Activated CD4-positive, alpha-beta T cell treated with anti-CD3 and anti-CD28 coated beads for 36 hours (primary cell): ENCODE measurements at regions of chr17 and their contacts with region 1.

Region 1: GRCh38 chr17:44775136-44775837 is 16.5 kb downstream of the ADAM11 start:
- DNase-seq: no peak
- ATAC-seq: peak; percentile 97
- H3K4me3 Mint-ChIP-seq: peak overlapping the region; percentile 77
- H3K27ac Mint-ChIP-seq: no peak overlapping the region
- H3K4me1 Mint-ChIP-seq: peaks cover 7% of the 10 kb centered on the region
- H3K27me3 Mint-ChIP-seq: no peaks in the 10 kb centered on the region

Region 2: GRCh38 chr17:43778337-43779144 is 996.7 kb before region 1 on chr17 and contains the start of gene DUSP3:
- CTCF ChIA-PET with region 1: no interaction called
- POLR2A ChIA-PET with region 1: no interaction called
- intact Hi-C with region 1: loop called in 1 of 2 experiments (anchors 5 kb)
- DNase-seq: peak; percentile 85
- ATAC-seq: peak; percentile 98
- H3K4me3 Mint-ChIP-seq: peak within 1 kb of the TSS; percentile 78
- H3K27ac Mint-ChIP-seq: peak within 1 kb of the TSS; percentile 70
- H3K4me1 Mint-ChIP-seq: peaks cover 7% of the 10 kb centered on the region
- H3K27me3 Mint-ChIP-seq: peaks cover 19% of the 10 kb centered on the region
- total RNA-seq, gene DUSP3: 23.4 to 24.8 TPM

Region 3: DNA sequence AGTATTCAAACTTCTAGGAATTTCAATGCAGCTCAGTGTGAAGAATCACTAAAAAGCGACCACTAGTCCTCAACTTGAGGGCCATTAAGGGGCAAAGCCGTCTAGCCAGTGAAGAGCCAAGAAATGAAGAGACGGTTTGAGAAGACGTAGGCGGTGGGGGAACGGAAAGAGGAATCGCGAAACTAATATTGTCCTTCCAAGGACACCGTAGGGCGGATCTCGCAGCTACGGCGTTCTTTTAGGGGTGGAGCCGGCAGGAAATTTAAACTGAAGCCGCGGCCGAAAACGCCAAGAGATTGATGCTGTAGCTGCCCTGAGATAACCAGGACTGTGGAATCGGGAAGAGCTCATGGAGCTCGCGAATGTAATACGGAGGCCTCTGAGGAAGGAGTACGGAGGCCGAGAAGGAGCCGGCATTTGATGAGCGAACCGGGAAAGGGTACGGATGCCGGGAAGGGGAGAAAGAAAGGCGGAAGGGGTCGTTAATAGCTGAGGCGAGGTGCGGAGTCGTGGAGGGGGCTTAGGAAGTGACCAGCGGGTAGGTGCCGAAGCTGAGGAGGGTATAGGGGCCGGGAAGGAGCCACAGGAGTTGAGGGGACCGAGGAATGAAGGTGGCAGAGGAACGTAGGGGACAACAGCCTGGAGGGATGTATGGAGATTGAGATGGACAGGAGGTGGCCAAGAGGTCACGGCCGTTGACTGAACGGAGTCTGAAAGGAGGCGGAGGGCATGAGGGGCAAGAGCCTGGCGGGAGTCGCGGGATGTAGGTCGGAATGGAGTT is 66.7 kb before region 1 on chr17 and contains the start of gene DBF4B:
- CTCF ChIA-PET with region 1: no interaction called
- POLR2A ChIA-PET with region 1: no interaction called
- intact Hi-C with region 1: loop called in 1 of 2 experiments (anchors 1 kb)
- DNase-seq: peak; percentile 89
- ATAC-seq: peak; percentile 85
- H3K4me3 Mint-ChIP-seq: no peak within 1 kb of the TSS
- H3K27ac Mint-ChIP-seq: no peak within 1 kb of the TSS
- H3K4me1 Mint-ChIP-seq: peaks cover 5% of the 10 kb centered on the region
- H3K27me3 Mint-ChIP-seq: peaks cover 5% of the 10 kb centered on the region
- total RNA-seq, gene DBF4B: 23.5 to 26.4 TPM

Region 4: DNA sequence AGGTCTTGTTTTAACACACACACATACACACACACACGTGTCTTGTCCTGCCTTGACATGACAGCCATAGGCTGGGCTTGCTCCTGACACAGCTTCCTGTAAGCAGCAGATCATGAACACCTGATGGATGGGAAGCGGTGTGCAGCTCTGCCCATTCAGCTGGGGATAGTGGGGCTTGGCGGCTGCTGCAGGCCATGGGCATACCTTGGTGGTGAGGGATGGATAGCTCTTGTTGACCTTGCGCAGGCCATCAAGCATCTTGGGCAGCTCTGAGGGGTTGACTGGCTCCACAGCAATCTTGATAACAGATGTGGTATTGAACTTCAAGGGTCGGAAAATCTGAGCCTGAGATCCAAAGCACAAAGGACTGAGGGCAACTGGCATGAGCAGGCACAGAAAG is 84.4 kb after region 1 on chr17:
- CTCF ChIA-PET with region 1: interaction called, 49 read pairs
- POLR2A ChIA-PET with region 1: interaction called, 8 read pairs
- intact Hi-C with region 1: no loop called
- DNase-seq: no peak
- ATAC-seq: no peak
- H3K4me3 Mint-ChIP-seq: no peak overlapping the region
- H3K27ac Mint-ChIP-seq: no peak overlapping the region
- H3K4me1 Mint-ChIP-seq: no peaks in the 10 kb centered on the region
- H3K27me3 Mint-ChIP-seq: no peaks in the 10 kb centered on the region

Region 5: DNA sequence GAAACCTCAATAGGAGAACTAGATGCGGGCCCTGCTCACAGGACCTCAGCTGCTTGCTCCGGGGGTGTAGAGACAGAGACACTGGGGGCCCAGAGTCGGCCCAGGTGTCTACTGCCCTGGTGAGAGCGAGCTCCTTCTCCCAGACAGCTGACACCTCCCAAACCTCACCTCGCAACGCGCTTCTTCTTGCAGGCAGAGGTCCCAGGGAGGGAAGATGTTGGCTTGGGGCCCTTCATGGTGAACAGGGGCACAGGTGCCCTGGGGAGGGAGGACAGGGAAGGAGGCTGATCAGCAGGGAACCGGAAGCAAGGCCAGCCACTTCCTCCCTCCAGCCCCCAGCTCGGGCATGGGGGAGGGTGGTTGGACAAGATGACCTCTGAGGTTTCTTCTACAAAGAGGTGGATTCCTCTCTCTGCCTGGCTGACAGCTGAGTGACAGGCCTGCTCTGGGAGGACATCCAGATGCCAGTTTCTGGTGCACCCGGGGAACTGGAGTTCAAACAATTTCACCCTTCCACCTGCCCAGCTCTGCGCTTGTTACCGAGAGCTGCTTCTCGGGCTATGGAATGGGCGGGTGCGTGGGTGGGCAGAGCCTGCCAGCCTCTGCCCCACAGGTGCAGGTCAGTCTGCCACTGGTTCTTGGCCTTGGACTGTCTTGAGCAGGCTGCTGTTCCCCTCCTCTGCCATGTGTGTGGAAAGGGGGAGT is 151.7 kb after region 1 on chr17:
- CTCF ChIA-PET with region 1: no interaction called
- POLR2A ChIA-PET with region 1: no interaction called
- intact Hi-C with region 1: no loop called
- DNase-seq: peak; percentile 3
- ATAC-seq: no peak
- H3K4me3 Mint-ChIP-seq: no peak overlapping the region
- H3K27ac Mint-ChIP-seq: no peak overlapping the region
- H3K4me1 Mint-ChIP-seq: no peaks in the 10 kb centered on the region
- H3K27me3 Mint-ChIP-seq: no peaks in the 10 kb centered on the region

Region 6: DNA sequence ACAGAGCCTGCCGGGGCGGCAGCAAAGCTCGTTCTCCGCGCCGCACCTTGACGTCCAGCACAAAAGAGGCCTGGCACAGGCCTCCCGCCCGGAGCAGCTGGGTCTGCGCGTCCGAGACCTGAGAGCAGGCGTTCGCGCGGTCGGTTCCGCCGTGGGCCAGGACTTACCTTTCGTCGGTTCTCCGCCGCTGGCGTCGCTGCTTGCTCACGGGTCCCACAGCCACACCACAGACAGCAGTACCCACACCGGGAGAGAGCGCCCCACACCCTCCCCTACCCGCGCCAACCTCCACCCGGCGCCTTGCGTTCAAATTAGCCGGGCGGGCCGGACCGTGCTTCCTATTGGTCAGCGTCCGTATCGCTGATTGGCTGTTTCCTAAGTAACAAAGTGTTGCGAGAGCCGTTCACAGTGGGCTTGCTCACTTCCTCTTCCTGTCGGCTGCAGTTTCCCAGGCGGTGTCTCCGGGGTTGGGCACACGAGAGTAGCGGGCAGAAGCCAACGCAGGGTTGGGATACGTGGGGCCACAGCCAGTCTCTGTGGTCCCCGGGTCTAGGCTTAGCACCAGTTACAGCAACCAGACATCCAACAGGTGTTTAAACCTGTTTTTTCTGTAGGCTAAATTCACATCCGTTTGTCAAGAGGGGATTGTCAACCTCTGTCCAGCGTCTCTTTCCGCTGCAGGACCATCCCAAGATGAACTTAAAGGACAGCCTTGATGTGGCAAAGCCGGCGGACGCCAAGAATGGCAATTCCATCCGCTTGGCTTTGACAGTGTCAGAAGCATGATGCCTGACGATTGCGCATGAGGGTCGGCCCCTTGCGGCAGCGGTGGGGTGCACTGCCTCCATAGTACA is 172.4 kb after region 1 on chr17 and contains the start of gene KIF18B:
- CTCF ChIA-PET with region 1: no interaction called
- POLR2A ChIA-PET with region 1: no interaction called
- intact Hi-C with region 1: loop called in 1 of 2 experiments (anchors 1 kb)
- DNase-seq: peak; percentile 96
- ATAC-seq: peak; percentile 98
- H3K4me3 Mint-ChIP-seq: peak within 1 kb of the TSS; percentile 90
- H3K27ac Mint-ChIP-seq: peak within 1 kb of the TSS; percentile 88
- H3K4me1 Mint-ChIP-seq: peaks cover 4% of the 10 kb centered on the region
- H3K27me3 Mint-ChIP-seq: no peaks in the 10 kb centered on the region
- total RNA-seq, gene KIF18B: 38.9 to 48.7 TPM

Region 7: DNA sequence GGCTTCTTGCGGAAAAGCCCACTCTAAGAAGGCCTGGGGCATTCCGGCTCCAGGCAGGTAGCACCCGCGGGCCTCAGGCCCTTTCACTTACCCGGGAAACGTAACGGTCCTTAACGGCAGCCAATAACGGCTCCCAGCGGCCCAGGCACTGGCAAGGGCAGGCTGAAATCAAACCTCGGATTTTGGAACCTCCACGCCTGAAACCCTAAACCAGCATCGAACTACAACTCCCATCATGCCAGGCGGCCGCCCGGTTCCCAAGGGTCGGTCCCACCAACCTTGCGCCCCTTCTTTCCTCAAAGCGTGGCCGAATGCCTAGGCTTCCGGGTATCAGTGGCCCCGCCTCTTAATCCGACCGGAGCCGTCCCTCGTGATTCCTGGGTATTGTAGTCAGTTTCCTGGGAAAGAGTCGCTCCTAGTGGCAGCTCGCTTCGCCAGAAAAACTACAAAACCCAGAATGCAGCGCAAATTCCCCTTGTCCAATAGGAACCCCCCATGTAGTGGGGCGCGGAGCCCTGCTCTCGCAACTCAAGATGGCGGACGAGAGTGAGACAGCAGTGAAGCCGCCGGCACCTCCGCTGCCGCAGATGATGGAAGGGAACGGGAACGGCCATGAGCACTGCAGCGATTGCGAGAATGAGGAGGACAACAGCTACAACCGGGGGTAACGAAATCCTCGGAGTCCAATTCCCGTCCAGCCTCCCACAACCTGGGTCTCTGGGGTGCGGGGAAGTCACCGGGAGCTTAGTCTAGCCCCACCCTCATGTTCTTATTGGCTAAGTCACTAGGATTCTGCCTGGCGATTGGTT is 285.7 kb after region 1 on chr17 and contains the start of gene NMT1:
- CTCF ChIA-PET with region 1: interaction called, 3 read pairs
- POLR2A ChIA-PET with region 1: no interaction called
- intact Hi-C with region 1: loop called in 1 of 2 experiments (anchors 1 kb)
- DNase-seq: peak; percentile 97
- ATAC-seq: peak; percentile 92
- H3K4me3 Mint-ChIP-seq: peak within 1 kb of the TSS; percentile 84
- H3K27ac Mint-ChIP-seq: peak within 1 kb of the TSS; percentile 96
- H3K4me1 Mint-ChIP-seq: peaks cover 42% of the 10 kb centered on the region
- H3K27me3 Mint-ChIP-seq: no peaks in the 10 kb centered on the region
- total RNA-seq, gene NMT1: 170 to 175 TPM